Mammary epithelial cell (primary cell): ENCODE measurements at regions of chr3 and their contacts with region 1.

Region 1: DNA sequence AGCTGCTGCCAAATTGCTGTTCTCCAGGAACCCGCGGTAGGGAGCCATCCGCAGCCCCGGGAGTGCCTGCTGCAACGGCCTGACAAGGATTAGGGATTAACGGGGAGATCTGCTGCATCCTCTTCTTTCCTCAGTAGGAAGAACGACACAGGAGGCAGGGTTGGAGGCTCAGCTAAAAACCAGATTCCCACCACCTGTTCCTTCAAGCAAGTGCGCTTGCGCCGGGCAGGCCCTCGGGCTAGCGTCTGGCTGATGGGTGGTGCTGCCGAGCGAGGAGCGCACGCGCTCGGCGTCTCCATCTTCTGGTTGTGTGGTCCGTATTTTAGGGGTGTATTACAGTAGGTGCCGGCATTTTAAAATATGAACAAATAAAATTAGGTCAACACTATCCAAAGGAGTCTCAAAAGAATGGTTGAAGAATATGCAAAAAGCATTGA is 25.4 kb upstream of the SLC25A26 start:
- DNase-seq: peak; percentile 39
- H3K4me3 ChIP-seq: no peak overlapping the region
- H3K27ac ChIP-seq: no peak overlapping the region
- H3K4me1 ChIP-seq: no peaks in the 10 kb centered on the region
- H3K27me3 ChIP-seq: no peaks in the 10 kb centered on the region
- CTCF ChIP-seq: no peak

Region 2: DNA sequence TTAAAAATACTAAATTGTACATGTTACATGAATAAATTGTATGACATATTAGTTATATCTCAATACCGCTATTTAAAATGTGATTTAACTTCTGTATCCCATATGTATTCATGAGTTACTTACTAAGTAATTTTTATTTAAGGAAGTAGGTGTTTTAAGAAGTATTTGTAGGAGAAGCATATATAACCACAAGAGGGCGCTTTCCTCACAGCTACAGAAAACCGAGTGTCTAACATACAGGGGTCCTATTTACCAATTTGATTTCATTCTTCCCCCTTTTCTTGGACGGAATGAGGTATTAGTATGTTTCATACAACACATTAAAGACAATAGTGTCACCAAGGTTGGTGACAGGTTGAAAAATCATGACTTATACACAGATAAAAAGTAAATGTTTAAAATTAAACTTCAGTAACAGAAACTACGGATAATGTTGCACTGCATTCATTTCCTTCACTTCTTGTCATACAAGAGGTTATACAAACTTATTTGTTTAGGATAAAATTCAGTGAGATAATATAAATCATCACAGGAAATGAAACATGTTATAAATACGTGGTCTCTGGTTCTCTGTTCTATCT is 410.2 kb before region 1 on chr3:
- CTCF ChIA-PET with region 1: no interaction called
- dilution Hi-C with region 1: no loop called
- in situ Hi-C with region 1: no loop called
- intact Hi-C with region 1: loop called (anchors 1 kb)
- DNase-seq: peak; percentile 9
- H3K4me3 ChIP-seq: no peak overlapping the region
- H3K27ac ChIP-seq: no peak overlapping the region
- H3K4me1 ChIP-seq: no peaks in the 10 kb centered on the region
- H3K27me3 ChIP-seq: no peaks in the 10 kb centered on the region
- CTCF ChIP-seq: peak; percentile 57 to 69